ENCODE measurements at regions of chr11 and their contacts with region 1.

Region 1: DNA sequence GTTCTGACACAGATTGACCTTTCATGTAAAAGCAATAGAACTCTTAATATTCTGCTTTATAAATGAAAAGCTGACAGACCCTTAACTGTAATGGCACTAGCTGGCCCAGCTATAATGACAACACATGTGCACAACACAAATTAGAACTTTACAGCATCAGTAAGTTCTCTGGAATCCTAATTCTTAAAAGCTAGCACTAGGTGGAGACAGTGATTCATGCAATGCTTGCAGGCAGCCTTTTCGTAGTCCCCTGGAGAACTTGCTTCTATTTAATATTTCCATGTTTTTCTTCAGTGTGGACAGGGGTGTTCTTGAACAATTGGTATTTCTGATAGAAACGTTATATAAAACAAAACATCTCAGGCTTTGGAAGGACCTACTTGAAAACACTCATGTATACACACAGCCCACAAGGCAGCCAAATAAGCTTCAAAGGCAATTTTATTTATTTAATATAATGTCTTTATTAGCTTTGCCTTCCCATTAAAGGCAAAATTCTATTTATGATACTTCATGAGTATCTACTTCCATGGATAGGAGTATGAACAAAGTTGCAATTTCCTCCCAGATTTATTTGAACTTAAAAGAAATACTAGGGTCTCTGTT is 374.3 kb upstream of the MPPED2 start:
- DNase-seq: peak; percentile 44
- ATAC-seq: peak; percentile 82
- H3K4me3 ChIP-seq: no peak overlapping the region
- H3K27ac ChIP-seq: no peak overlapping the region
- H3K4me1 ChIP-seq: no peaks in the 10 kb centered on the region
- H3K27me3 ChIP-seq: no peaks in the 10 kb centered on the region
- CTCF ChIP-seq: peak; percentile 78
- EP300 ChIP-seq: no peak
- POLR2A ChIP-seq: no peak
- RAD21 ChIP-seq: peak; percentile 70

Region 2: DNA sequence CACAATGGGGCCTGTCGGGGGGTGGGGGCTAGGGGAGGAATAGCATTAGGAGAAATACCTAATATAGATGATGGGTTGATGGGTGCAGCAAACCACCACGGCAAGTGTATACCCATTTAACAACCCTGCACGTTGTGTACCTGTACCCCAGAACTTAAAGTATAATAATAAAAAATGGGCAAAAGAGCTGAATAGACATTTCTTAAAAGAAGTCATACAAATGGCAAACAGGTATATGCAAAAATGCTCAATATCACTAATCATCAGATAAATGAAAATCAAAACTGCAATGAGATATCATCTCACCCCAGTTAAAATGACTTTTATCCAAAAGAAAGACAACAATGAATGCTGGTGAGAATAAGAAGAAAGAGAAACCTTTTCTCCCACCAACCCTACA is 10.7 kb before region 1 on chr11:
- CTCF ChIA-PET with region 1: no interaction called
- POLR2A ChIA-PET with region 1: no interaction called
- in situ Hi-C with region 1: no loop called
- intact Hi-C with region 1: no loop called
- DNase-seq: no peak
- ATAC-seq: no peak
- H3K4me3 ChIP-seq: no peak overlapping the region
- H3K27ac ChIP-seq: no peak overlapping the region
- H3K4me1 ChIP-seq: no peaks in the 10 kb centered on the region
- H3K27me3 ChIP-seq: no peaks in the 10 kb centered on the region
- CTCF ChIP-seq: no peak
- EP300 ChIP-seq: no peak
- POLR2A ChIP-seq: no peak
- RAD21 ChIP-seq: no peak

Region 3: GRCh38 chr11:31030138-31030792 is 69.8 kb after region 1 on chr11:
- CTCF ChIA-PET with region 1: no interaction called
- POLR2A ChIA-PET with region 1: no interaction called
- in situ Hi-C with region 1: loop called (anchors 10 kb)
- intact Hi-C with region 1: no loop called
- DNase-seq: no peak
- ATAC-seq: no peak
- H3K4me3 ChIP-seq: no peak overlapping the region
- H3K27ac ChIP-seq: no peak overlapping the region
- H3K4me1 ChIP-seq: no peaks in the 10 kb centered on the region
- H3K27me3 ChIP-seq: no peaks in the 10 kb centered on the region; a peak in 1 of 5 replicates
- CTCF ChIP-seq: no peak
- EP300 ChIP-seq: no peak
- POLR2A ChIP-seq: no peak
- RAD21 ChIP-seq: no peak

Region 4: DNA sequence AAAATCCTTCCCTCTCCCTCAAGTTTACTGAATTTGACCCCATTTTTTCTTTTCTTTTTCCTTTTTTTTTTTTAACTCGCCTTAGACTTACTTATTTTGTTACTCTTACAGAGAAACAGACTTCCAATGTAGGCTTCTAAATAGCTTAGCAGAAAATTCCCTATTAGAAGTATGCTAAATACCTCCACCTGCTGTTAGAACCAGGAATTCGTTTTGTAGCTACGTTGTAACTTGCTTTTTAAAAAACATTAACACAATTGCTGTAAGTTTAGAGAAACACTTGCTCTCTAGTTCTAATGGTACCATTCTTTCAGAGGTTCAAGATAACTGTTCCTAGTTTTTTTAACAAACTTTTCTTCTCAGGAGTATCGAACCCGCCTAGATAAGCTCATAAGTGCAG is 84.8 kb after region 1 on chr11:
- CTCF ChIA-PET with region 1: interaction called, 30 read pairs
- POLR2A ChIA-PET with region 1: no interaction called
- in situ Hi-C with region 1: no loop called
- intact Hi-C with region 1: loop called (anchors 1 kb)
- DNase-seq: peak; percentile 27
- ATAC-seq: no peak
- H3K4me3 ChIP-seq: no peak overlapping the region
- H3K27ac ChIP-seq: no peak overlapping the region
- H3K4me1 ChIP-seq: 0 out of 2 replicates have a peak, but pooled peaks cover 8% of the 10 kb centered on the region
- H3K27me3 ChIP-seq: no peaks in the 10 kb centered on the region
- CTCF ChIP-seq: peak; percentile 50
- EP300 ChIP-seq: no peak
- POLR2A ChIP-seq: no peak
- RAD21 ChIP-seq: peak; percentile 16; the same call in 1 of the 2 replicates

Region 5: DNA sequence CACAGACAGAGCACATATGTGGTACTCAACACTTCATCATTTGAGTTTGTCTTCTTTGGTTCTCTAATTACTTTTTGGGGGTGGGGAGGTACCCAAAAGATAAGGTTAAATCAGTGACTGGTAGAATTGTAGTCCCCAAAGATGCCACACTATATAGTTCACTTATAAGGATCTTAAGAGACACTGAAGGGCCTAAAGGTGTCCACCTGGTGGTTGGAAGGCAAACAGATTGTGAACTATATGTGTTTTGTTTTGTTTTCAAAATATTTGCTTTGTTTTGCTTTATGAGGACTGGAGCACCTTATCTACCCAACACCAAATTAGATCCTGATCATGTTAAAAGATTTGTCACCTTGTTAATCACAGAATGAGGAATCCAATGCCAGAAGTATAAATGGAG is 272.9 kb after region 1 on chr11:
- CTCF ChIA-PET with region 1: interaction called, 4 read pairs
- POLR2A ChIA-PET with region 1: no interaction called
- in situ Hi-C with region 1: loop called (anchors 10 kb)
- intact Hi-C with region 1: loop called (anchors 2 kb)
- DNase-seq: peak; percentile 2
- ATAC-seq: peak; percentile 53
- H3K4me3 ChIP-seq: no peak overlapping the region
- H3K27ac ChIP-seq: no peak overlapping the region
- H3K4me1 ChIP-seq: no peaks in the 10 kb centered on the region
- H3K27me3 ChIP-seq: no peaks in the 10 kb centered on the region
- CTCF ChIP-seq: no peak
- EP300 ChIP-seq: no peak
- POLR2A ChIP-seq: no peak
- RAD21 ChIP-seq: no peak

Region 6: DNA sequence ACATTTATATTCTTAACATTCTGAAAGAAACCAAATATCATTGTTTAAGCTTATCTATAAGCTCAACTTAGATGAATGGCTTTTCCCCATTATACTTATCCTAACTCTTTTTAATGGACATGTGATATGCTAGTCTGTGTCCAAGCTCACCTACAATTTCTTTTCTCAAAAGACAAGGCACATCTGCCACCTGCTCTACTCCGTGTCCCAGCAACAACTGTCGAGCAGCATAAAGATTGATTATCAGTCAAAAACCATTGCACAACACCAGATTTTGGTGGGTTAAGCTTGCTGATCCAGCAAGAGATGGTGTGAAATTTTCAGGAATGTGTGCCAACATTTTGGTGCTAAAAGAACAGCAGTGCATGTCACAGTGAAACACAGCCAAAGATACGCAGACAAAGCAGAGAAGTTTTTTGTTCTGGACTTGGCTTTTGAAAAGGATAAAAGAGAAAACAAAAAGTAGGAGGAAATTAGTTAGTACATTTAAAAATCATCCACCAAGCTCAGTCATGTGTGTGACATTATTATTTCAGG is 343.2 kb after region 1 on chr11:
- CTCF ChIA-PET with region 1: no interaction called
- POLR2A ChIA-PET with region 1: no interaction called
- in situ Hi-C with region 1: no loop called
- intact Hi-C with region 1: loop called (anchors 5 kb)
- DNase-seq: no peak
- ATAC-seq: no peak
- H3K4me3 ChIP-seq: no peak overlapping the region
- H3K27ac ChIP-seq: no peak overlapping the region
- H3K4me1 ChIP-seq: no peaks in the 10 kb centered on the region
- H3K27me3 ChIP-seq: no peaks in the 10 kb centered on the region
- CTCF ChIP-seq: no peak
- EP300 ChIP-seq: no peak
- POLR2A ChIP-seq: no peak
- RAD21 ChIP-seq: no peak

Region 7: DNA sequence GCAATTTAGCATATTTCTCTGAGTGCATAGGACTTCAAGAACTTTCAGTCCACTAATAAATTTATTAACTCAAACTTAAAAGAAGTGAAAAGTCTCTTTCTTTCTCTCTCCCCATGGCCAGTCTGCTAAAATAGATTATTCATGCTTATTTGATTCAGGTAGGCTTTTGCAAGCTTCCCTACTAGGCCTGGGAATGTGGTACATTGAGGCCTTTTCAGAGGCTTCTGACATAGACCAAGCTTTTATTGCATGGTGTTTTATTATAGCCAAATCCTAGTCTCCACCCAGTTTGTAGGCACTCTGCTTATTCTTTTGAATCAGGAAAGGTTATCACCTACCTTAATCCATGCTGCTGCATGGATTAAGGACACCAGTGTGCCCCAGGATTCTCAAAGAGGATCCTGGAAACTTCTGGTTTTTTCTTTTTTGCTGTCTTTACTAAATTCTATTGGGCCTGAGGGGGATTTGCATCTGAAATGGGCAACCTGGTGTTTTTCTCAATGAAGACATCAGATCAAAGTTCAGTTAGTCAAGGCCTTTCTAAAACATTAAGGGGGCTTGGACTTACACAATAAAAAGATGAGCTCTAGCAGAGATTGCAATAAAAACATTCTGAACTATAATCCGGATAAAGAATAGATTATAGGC is 641.3 kb after region 1 on chr11:
- CTCF ChIA-PET with region 1: no interaction called
- POLR2A ChIA-PET with region 1: no interaction called
- in situ Hi-C with region 1: no loop called
- intact Hi-C with region 1: no loop called
- DNase-seq: no peak
- ATAC-seq: no peak
- H3K4me3 ChIP-seq: no peak overlapping the region
- H3K27ac ChIP-seq: no peak overlapping the region
- H3K4me1 ChIP-seq: no peaks in the 10 kb centered on the region
- H3K27me3 ChIP-seq: no peaks in the 10 kb centered on the region
- CTCF ChIP-seq: no peak
- EP300 ChIP-seq: no peak
- POLR2A ChIP-seq: no peak
- RAD21 ChIP-seq: no peak

Region 8: GRCh38 chr11:31958076-31958735 is 997.7 kb after region 1 on chr11:
- CTCF ChIA-PET with region 1: no interaction called
- POLR2A ChIA-PET with region 1: no interaction called
- in situ Hi-C with region 1: no loop called
- intact Hi-C with region 1: loop called (anchors 5 kb)
- DNase-seq: peak; percentile 15
- ATAC-seq: peak; percentile 95
- H3K4me3 ChIP-seq: no peak overlapping the region
- H3K27ac ChIP-seq: no peak overlapping the region
- H3K4me1 ChIP-seq: no peaks in the 10 kb centered on the region
- H3K27me3 ChIP-seq: peaks cover 0 to 13% of the 10 kb centered on the region in 2 experiments; a peak in 1 of 5 replicates
- CTCF ChIP-seq: peak; percentile 76
- EP300 ChIP-seq: no peak
- POLR2A ChIP-seq: no peak
- RAD21 ChIP-seq: peak; percentile 62

Measured in HepG2 (cell line).